ENCODE measurements at regions of chr4 and their contacts with region 1.

Region 1: GRCh38 chr4:100060765-100061416 is 110.8 kb upstream of the H2AZ1 start:
- DNase-seq: no peak
- ATAC-seq: no peak
- H3K4me3 Mint-ChIP-seq: no peak overlapping the region
- H3K27ac Mint-ChIP-seq: no peak overlapping the region
- H3K4me1 Mint-ChIP-seq: no peaks in the 10 kb centered on the region
- H3K27me3 Mint-ChIP-seq: peaks cover 7% of the 10 kb centered on the region

Region 2: GRCh38 chr4:99293357-99293756 is 767.5 kb before region 1 on chr4:
- CTCF ChIA-PET with region 1: no interaction called
- POLR2A ChIA-PET with region 1: no interaction called
- intact Hi-C with region 1: no loop called
- DNase-seq: no peak
- ATAC-seq: no peak
- H3K4me3 Mint-ChIP-seq: no peak overlapping the region
- H3K27ac Mint-ChIP-seq: no peak overlapping the region
- H3K4me1 Mint-ChIP-seq: no peaks in the 10 kb centered on the region
- H3K27me3 Mint-ChIP-seq: no peaks in the 10 kb centered on the region

Region 3: DNA sequence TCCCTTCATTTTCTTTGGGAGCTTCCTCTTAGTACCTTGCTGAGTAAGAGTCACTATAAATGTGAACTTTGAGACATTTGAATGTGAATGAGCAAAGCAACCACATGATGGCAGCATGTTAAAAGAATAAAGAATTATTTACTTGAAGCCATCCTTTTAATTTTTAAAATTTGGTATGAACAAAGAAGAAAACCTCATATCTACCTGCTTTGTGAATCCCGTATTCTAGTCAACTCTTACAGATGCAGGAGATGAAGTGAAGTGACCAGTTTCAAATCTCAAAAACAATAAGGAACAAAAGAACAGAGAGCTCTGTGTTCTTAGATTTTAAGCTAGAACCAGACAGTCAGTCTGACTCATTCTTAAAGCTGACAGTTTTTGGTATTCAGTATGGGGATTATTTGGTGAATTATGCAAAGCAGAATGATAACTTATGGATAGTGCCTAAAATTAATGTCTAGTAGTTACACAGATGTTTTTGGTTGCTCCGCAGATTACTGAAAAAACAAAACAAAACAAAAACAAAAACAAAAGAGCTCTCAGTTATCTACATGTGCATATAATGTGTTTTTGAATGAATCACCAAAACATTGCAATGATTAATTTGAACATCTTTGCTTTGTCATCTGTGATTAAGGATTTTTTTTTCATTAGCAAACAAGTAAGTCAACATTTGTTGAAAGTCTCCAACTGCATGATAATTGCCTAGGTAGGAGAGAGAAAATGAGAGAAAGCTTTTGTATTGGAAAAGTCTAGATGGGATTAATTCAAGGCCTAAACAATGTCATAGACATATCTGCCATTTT is 62.6 kb before region 1 on chr4:
- CTCF ChIA-PET with region 1: interaction called, 4 read pairs
- POLR2A ChIA-PET with region 1: no interaction called
- intact Hi-C with region 1: loop called in 1 of 2 experiments (anchors 2 kb)
- DNase-seq: no peak
- ATAC-seq: peak; percentile 76
- H3K4me3 Mint-ChIP-seq: no peak overlapping the region
- H3K27ac Mint-ChIP-seq: no peak overlapping the region
- H3K4me1 Mint-ChIP-seq: peaks cover 5% of the 10 kb centered on the region
- H3K27me3 Mint-ChIP-seq: peaks cover 4% of the 10 kb centered on the region